ENCODE measurements at regions of chr14 and their contacts with region 1.

Region 1: DNA sequence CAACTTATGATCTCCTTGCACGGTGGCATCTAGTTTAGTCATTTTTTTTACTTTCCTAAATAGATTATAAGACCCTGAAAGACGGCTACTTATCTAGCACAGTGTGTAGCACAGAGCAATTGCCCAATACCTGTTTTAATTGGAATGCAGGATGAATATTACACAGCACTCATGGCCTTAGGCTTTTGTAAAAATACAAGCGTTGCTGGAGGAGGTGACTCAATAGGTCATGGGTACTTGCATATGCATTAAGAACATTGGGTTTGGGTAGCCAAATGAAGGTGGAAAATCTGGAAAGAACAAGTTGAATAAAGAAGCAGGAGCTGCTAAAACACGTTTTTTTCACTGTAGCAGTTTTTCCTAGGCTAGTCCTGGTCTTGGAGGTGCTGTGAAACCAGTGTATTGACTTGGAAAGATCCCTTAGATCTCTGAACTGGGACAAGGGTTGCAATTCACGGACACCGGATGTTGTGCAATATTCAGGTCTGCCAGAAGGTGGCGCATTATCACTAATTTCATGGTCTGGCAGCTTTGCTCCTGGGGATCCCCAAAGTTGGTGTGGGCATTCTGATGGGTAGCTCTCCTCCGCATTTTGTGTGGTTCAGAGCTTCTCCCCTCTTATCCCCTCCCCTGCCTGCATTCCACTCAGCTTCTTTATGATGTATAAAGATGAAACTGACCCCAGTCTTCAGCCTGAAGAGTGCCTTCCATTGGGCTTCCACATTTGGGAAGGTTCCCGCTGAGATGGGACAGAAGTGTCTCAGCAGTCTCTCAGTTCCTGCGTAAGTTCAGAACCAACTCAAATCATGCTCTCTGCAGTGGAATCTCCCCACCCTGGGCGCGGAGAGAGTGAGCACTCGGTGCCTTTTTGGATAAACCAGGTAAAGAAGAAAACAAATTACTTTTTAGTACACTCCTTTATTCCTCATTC is 278.3 kb downstream of the NRXN3 start:
- DNase-seq: no peak
- ATAC-seq: no peak
- H3K4me3 ChIP-seq: no peak overlapping the region
- H3K27ac ChIP-seq: no peak overlapping the region
- H3K4me1 ChIP-seq: no peaks in the 10 kb centered on the region
- H3K27me3 ChIP-seq: no peaks in the 10 kb centered on the region

Region 2: DNA sequence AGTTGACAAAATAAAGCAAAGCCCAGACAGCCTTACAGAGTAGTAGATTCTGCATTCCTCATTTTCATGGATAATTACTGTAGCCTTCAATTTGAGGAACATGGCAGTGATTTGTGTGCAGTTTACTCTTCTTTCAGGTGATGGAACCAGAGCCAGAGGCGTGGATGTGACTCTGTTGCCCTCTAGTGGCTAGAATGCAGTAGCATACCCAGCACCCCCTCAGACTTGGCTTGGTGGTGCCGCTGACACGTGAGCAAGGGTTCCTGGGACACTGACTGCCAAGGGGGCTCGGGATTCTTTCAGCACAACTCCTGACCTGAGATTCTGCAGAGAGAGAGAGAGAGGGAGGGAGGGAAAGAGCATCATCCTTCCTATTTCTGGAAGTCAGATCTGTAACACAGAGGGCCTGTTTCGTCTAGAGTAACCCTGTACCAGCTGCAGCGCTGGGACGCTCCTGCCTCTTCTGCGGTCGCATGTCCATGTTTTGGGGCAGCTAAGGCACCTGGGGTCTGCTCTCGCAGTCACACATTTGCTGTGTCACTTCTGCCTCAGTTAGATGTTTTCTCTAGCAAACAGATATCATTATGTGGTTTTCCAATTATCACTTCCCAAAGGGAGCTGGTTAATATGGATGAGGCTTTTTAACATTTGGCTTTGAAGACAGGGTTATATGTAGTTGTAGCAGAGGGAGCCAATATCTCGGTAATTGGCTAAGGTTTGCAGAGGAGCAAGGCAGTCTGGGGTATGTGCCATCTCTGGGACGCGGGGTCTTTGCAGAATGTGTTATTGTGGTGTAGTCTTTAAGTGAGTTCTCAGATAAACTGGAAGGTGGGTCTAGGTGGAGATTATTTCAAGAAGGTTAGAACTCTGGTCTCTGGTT is 149.9 kb after region 1 on chr14:
- intact Hi-C with region 1: loop called in 1 of 2 experiments (anchors 10 kb)
- DNase-seq: no peak
- ATAC-seq: no peak
- H3K4me3 ChIP-seq: no peak overlapping the region
- H3K27ac ChIP-seq: no peak overlapping the region
- H3K4me1 ChIP-seq: no peaks in the 10 kb centered on the region
- H3K27me3 ChIP-seq: no peaks in the 10 kb centered on the region